IMR-90 (cell line): ENCODE measurements at regions of chr4 and their contacts with region 1.

Region 1: DNA sequence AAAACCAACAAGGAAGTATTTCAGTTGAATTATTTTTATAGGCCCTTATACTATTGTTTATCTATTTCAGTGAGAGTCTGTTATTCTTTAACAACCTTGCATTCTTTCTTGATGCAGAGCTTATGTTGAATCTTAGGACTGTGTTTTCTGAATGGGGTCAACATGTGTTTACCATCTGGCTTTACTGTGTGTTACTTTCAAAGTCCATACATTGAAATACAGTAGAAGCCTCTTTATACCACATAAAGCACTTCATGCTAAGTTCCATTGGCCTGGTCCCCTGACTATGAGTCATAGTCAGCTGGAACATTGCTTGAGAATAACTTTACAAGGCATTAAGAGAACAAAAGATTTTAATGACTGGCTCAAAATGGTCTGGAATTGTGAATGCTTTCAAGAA is 152.6 kb downstream of the GASK1B start:
- DNase-seq: peak; percentile 96
- ATAC-seq: peak; percentile 76
- H3K4me3 ChIP-seq: no peak overlapping the region
- H3K27ac ChIP-seq: peak overlapping the region; percentile 54
- H3K4me1 ChIP-seq: peaks cover 9% of the 10 kb centered on the region
- H3K27me3 ChIP-seq: no peaks in the 10 kb centered on the region
- CTCF ChIP-seq: no peak
- POLR2A ChIP-seq: no peak
- RAD21 ChIP-seq: no peak

Region 2: DNA sequence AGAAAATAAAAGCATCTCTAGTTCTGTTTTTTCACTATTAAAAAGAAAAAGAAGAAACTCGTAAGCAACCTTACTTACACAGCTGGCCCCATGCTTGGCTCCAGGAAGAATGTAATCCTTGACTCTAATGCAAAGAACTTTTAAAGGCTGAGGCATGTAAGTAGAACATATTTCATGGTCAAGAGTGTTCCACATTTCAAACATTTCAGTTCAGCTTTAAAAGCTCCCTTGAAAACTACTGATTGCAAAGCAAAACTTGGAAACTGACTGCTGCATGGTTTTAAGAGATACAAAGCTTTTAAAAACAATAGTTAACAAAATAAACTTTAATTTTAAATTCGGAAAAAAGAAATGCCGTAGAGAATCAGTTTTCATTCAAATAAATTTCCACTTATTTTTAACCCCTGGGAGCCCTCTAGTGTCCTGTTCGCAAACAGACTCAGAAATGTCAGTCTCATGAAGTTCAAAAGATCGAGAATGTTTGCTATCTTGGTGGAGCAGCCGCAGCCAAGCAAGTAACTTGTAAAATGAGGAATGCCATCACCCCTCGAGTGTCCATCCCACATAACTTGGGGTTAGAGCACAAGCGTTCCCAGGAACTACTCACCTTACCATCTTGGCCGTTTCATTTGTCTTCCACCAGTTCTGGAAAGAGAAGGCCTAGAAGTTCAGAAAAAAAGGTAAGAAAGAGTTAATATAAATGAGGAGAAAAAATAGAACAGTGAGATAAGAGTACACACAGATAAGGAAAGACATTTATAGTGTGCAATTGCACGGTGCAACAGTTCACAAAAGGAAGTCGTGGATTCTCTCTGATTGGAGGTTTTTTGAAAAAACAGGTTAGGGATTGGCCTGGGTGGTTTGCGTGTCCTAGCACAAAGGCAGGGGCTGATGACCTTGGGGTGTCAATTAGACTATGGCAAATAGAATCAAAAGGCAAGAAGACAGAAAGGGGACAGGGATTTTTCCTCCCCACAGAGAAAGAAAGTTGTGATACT is 152.4 kb after region 1 on chr4 and contains the start of gene GASK1B:
- CTCF ChIA-PET with region 1: no interaction called
- POLR2A ChIA-PET with region 1: no interaction called
- dilution Hi-C with region 1: loop called (anchors 25 kb)
- in situ Hi-C with region 1: no loop called
- intact Hi-C with region 1: loop called (anchors 1 kb)
- DNase-seq: peak; percentile 64
- ATAC-seq: peak; percentile 81
- H3K4me3 ChIP-seq: peak within 1 kb of the TSS; percentile 30
- H3K27ac ChIP-seq: peak within 1 kb of the TSS; percentile 71; the same call in 1 of the 2 replicates
- H3K4me1 ChIP-seq: peaks cover 17% of the 10 kb centered on the region
- H3K27me3 ChIP-seq: no peaks in the 10 kb centered on the region
- CTCF ChIP-seq: peak; percentile 81
- POLR2A ChIP-seq: no peak
- RAD21 ChIP-seq: peak; percentile 83
- total RNA-seq, gene GASK1B: 4.1 and 6.7 TPM in 2 replicates

Region 3: GRCh38 chr4:158193171-158193749 is 173.1 kb after region 1 on chr4:
- CTCF ChIA-PET with region 1: no interaction called
- POLR2A ChIA-PET with region 1: no interaction called
- dilution Hi-C with region 1: loop called (anchors 25 kb)
- in situ Hi-C with region 1: no loop called
- intact Hi-C with region 1: no loop called
- DNase-seq: peak; percentile 31
- ATAC-seq: peak; percentile 66; the same call in 1 of the 2 replicates
- H3K4me3 ChIP-seq: no peak overlapping the region
- H3K27ac ChIP-seq: no peak overlapping the region
- H3K4me1 ChIP-seq: no peaks in the 10 kb centered on the region
- H3K27me3 ChIP-seq: peaks cover 7% of the 10 kb centered on the region; the same call in 1 of the 2 replicates
- CTCF ChIP-seq: peak; percentile 61
- POLR2A ChIP-seq: no peak
- RAD21 ChIP-seq: peak; percentile 46